ENCODE measurements at regions of chr7 and their contacts with region 1.

Region 1: DNA sequence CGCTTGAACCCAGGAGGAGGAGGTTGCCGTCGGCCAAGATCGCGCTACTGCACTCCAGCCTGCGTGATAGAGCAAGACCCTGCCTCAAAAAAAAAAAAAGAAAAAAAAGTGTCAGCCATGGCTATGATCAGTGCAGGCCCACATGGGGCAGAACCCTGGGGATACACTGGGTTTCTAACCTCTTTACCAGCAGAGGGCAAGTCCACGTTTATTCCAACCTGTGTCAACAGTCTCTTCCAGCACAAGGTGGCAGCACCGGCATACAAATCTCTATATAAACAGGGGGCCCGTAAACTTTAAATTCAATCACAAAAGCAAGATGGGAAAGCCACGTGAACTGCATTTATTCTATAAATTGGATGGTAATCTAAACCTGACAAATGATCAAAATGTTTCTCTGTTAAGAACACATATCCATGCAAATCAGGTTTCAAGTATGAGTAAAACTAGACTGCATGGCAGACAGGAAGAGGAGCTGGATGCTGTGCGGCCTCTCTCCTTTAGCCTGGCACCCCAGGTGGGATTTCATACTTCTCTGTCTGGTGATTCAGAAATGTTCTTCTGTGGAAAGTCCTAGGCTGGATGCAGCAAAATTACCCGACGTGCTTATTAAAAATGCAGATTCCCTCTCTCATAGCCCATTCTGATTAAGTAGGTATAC is 60.0 kb upstream of the STEAP1B start:
- DNase-seq: peak; percentile 66
- H3K4me3 ChIP-seq: no peak overlapping the region
- H3K27ac ChIP-seq: no peak overlapping the region
- H3K4me1 ChIP-seq: no peaks in the 10 kb centered on the region
- H3K27me3 ChIP-seq: no peaks in the 10 kb centered on the region
- CTCF ChIP-seq: peak; percentile 76

Region 2: DNA sequence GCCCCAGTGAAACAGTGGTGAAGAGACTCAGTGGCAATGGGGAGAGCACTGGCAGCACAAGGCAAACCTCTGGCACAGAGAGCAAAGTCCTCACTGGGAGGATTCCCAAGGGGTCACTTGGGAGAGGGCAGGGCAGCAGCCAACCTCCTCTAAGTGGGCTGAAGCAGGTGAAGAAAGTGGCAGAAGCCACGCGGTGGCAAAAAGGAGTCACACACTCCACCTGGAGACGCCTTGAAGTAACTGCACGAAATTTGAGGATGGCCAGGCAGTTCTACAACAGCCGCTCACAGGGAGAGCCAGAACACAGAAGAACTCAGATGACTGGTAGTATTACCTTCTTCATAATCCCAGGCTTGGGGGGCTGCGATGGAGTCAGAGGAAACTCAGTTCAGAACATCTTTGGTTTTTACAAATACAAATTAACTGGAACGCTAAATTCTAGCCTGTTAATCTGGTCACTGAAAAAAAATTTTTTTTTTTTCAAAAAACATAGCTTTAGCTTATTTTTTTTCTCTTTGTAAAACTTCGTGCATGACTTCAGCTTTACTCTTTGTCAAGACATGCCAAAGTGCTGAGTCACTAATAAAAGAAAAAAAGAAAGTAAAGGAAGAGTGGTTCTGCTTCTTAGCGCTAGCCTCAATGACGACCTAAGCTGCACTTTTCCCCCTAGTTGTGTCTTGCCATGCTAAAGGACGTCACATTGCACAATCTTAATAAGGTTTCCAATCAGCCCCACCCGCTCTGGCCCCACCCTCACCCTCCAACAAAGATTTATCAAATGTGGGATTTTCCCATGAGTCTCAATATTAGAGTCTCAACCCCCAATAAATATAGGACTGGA is 166.6 kb after region 1 on chr7:
- intact Hi-C with region 1: loop called (anchors 5 kb)
- DNase-seq: no peak
- H3K4me3 ChIP-seq: no peak overlapping the region
- H3K27ac ChIP-seq: peak overlapping the region; percentile 13
- H3K4me1 ChIP-seq: no peaks in the 10 kb centered on the region
- H3K27me3 ChIP-seq: peaks cover 5% of the 10 kb centered on the region
- CTCF ChIP-seq: peak; percentile 30

Region 3: GRCh38 chr7:22782616-22783232 is 222.8 kb after region 1 on chr7:
- intact Hi-C with region 1: loop called (anchors 2 kb)
- DNase-seq: peak; percentile 73
- H3K4me3 ChIP-seq: no peak overlapping the region
- H3K27ac ChIP-seq: no peak overlapping the region
- H3K4me1 ChIP-seq: no peaks in the 10 kb centered on the region
- H3K27me3 ChIP-seq: no peaks in the 10 kb centered on the region
- CTCF ChIP-seq: peak; percentile 74

Region 4: DNA sequence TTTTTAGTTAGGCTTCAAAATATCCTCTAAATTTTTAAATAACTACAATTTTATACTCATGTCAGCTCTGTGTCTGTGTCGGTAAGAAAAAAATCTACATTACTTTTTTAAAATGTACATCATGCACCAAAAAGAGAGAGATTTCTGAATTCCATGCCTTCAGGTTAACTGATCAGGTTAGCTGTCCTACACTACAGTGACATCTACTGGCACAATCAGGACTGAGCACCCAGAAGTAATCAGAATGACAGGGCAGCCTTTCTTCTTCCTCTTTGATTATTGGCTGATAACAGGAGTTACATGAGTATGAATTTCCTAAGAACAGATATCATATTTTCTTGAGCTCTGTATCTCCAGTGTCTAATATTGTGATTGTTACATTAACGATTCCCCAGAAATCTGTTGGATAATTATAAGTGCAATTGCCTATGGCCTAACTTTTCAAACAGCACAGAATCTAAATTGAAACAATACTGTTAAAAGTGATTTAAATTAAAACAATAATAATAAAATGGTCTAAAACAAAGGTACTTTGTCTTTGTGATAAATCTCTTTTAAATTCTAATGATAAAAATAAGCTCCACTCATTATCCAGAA is 495.7 kb after region 1 on chr7:
- intact Hi-C with region 1: loop called (anchors 5 kb)
- DNase-seq: peak; percentile 55
- H3K4me3 ChIP-seq: no peak overlapping the region
- H3K27ac ChIP-seq: no peak overlapping the region
- H3K4me1 ChIP-seq: no peaks in the 10 kb centered on the region
- H3K27me3 ChIP-seq: no peaks in the 10 kb centered on the region
- CTCF ChIP-seq: peak; percentile 85

Measured in colonic mucosa (tissue), 4 donors.